ENCODE measurements at regions of chr5 and their contacts with region 1.

Region 1: DNA sequence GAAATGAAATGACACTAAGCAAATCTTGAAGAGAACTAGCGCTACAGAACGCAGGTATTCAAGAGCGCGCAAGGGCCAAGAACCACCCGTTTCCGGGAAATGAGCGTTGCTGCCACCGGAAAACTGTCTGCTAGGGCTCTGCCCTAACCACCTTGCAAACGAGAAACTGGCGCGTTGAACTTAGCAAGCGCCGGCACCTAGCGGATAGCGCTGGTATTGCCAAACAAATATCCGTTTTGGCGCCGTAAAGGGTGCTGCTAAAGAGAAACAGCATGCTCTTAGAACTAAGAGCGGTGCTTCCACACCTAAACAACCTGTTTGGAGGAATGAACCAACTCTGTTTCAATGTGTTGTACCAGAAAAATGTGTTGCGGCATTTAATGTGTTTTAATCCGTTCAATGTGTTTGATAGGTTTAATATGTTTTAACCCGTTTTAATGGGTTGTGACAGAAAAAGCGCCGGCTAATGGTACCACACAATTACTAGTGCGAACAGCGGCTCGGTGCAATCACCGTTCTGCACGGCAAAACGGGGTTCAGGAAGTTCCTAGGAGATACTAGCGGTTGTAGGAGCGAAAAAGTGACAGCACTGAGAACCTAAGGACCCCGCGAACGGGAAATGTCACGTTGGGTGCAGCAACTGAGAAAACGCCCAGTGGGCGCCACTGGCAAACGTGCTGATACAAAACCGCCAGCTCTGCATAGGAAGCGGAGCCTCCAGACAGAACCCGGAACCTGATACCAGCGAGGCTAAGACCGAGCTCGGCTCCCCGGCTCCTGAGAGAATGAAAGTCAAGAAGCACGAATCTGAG is at the start of gene ANXA2R:
- DNase-seq: peak; percentile 100
- ATAC-seq: peak; percentile 36
- H3K4me3 ChIP-seq: peak within 1 kb of the TSS; percentile 70
- H3K27ac ChIP-seq: peak within 1 kb of the TSS; percentile 90
- H3K4me1 ChIP-seq: peaks cover 20% of the 10 kb centered on the region
- H3K27me3 ChIP-seq: no peaks in the 10 kb centered on the region
- CTCF ChIP-seq: peak; percentile 89
- total RNA-seq, gene ANXA2R: 4.8 and 8.9 TPM in 2 replicates

Region 2: GRCh38 chr5:42950440-42951292 is 89.8 kb before region 1 on chr5:
- CTCF ChIA-PET with region 1: interaction called, 4 read pairs
- POLR2A ChIA-PET with region 1: interaction called, 11 read pairs
- intact Hi-C with region 1: loop called (anchors 1 kb)
- DNase-seq: peak; percentile 100
- ATAC-seq: peak; percentile 81
- H3K4me3 ChIP-seq: peak overlapping the region; percentile 64
- H3K27ac ChIP-seq: peak overlapping the region; percentile 94
- H3K4me1 ChIP-seq: peaks cover 30% of the 10 kb centered on the region
- H3K27me3 ChIP-seq: no peaks in the 10 kb centered on the region
- CTCF ChIP-seq: no peak

Region 3: GRCh38 chr5:43008369-43009153 is 31.9 kb before region 1 on chr5:
- CTCF ChIA-PET with region 1: interaction called, 3 read pairs
- POLR2A ChIA-PET with region 1: interaction called, 9 read pairs
- intact Hi-C with region 1: loop called (anchors 5 kb)
- DNase-seq: peak; percentile 98
- ATAC-seq: peak; percentile 64
- H3K4me3 ChIP-seq: peak overlapping the region; percentile 66
- H3K27ac ChIP-seq: peak overlapping the region; percentile 71
- H3K4me1 ChIP-seq: peaks cover 14% of the 10 kb centered on the region; the same call in 1 of the 2 replicates
- H3K27me3 ChIP-seq: no peaks in the 10 kb centered on the region
- CTCF ChIP-seq: peak; percentile 48; the same call in 1 of the 2 replicates

Region 4: DNA sequence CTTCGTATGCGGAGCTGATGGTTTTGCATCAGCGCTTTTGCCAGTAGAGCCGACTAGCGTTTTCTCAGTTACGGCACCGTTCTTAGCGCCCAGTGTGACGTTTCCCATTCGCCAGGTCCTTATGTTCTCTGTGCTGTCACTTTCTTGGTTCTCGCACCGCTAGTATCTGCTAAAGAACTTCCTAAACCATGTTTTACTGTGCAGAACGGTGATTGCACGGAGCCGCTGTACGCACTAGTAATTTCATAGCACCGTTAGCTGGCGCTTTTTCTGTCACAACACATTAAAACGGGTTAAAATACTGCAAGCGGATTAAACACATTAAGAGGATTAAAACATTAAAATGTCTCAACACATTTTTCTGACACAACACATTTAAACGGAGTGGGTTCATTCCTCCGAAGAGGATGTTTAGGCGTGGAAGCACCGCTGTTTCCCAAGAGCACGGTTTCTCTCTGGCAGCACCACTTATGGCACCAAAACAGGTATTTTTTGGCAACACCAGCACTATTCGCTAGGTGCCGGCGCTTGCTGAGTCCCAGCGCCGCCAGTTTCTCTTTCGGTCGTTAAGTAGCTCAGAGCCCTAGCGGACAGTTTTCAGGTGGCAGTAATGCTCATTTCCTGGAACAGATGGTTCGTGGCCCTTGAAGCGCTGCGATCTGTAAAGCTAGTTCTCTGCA is 20.7 kb before region 1 on chr5:
- CTCF ChIA-PET with region 1: interaction called, 6 read pairs
- POLR2A ChIA-PET with region 1: interaction called, 9 read pairs
- intact Hi-C with region 1: loop called (anchors 1 kb)
- DNase-seq: peak; percentile 97
- ATAC-seq: peak; percentile 66
- H3K4me3 ChIP-seq: peak overlapping the region; percentile 80
- H3K27ac ChIP-seq: peak overlapping the region; percentile 85
- H3K4me1 ChIP-seq: peaks cover 39% of the 10 kb centered on the region
- H3K27me3 ChIP-seq: no peaks in the 10 kb centered on the region
- CTCF ChIP-seq: peak; percentile 67

Region 5: GRCh38 chr5:43066799-43067741 is 26.6 kb after region 1 on chr5:
- CTCF ChIA-PET with region 1: interaction called, 20 read pairs
- POLR2A ChIA-PET with region 1: interaction called, 8 read pairs
- intact Hi-C with region 1: loop called (anchors 1 kb)
- DNase-seq: peak; percentile 98
- ATAC-seq: peak; percentile 42
- H3K4me3 ChIP-seq: peak overlapping the region; percentile 87
- H3K27ac ChIP-seq: peak overlapping the region; percentile 93
- H3K4me1 ChIP-seq: peaks cover 43% of the 10 kb centered on the region
- H3K27me3 ChIP-seq: no peaks in the 10 kb centered on the region
- CTCF ChIP-seq: no peak

Region 6: GRCh38 chr5:43105369-43106289 is 65.1 kb after region 1 on chr5:
- CTCF ChIA-PET with region 1: no interaction called
- POLR2A ChIA-PET with region 1: no interaction called
- intact Hi-C with region 1: loop called (anchors 1 kb)
- DNase-seq: peak; percentile 98
- ATAC-seq: peak; percentile 93
- H3K4me3 ChIP-seq: peak overlapping the region; percentile 67
- H3K27ac ChIP-seq: peak overlapping the region; percentile 31
- H3K4me1 ChIP-seq: peaks cover 12% of the 10 kb centered on the region
- H3K27me3 ChIP-seq: no peaks in the 10 kb centered on the region
- CTCF ChIP-seq: peak; percentile 100

Region 7: DNA sequence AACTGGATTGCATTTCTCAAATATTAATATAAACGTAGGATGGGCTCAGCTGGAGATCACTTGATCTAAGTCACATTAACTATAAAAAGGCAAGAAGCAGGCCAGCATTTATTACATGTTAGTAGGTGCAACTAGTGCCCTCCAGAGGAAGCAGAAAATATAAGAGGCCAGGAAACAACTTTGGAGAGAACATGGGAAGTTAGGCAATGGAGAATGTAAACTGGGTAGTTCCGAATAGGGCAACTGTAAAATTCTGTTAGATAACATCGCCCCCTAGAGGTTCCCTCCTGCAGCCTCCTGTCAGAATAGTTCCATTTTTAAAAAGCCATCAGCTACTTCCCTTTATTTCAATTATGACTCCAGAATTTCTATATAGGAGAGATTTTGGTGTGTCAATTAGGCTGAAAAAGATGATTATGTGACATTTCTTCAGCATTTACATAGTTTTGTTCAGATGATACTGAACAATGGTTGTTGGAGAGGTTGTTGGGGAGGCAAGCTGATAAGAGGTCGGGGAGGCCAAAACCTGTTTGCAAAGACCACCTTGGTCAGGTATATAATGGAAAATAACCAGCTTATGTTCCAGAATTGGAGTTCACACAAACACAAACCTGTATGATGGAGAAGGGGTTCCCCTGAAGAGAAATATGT is 349.3 kb after region 1 on chr5:
- CTCF ChIA-PET with region 1: no interaction called
- POLR2A ChIA-PET with region 1: no interaction called
- intact Hi-C with region 1: loop called (anchors 10 kb)
- DNase-seq: peak; percentile 96
- ATAC-seq: peak; percentile 84
- H3K4me3 ChIP-seq: no peak overlapping the region
- H3K27ac ChIP-seq: no peak overlapping the region
- H3K4me1 ChIP-seq: peaks cover 14% of the 10 kb centered on the region
- H3K27me3 ChIP-seq: no peaks in the 10 kb centered on the region
- CTCF ChIP-seq: peak; percentile 98

Measured in PC-3 (cell line).